Esophagus muscularis mucosa (tissue), 4 donors: ENCODE measurements at regions of chr1 and their contacts with region 1.

Region 1: DNA sequence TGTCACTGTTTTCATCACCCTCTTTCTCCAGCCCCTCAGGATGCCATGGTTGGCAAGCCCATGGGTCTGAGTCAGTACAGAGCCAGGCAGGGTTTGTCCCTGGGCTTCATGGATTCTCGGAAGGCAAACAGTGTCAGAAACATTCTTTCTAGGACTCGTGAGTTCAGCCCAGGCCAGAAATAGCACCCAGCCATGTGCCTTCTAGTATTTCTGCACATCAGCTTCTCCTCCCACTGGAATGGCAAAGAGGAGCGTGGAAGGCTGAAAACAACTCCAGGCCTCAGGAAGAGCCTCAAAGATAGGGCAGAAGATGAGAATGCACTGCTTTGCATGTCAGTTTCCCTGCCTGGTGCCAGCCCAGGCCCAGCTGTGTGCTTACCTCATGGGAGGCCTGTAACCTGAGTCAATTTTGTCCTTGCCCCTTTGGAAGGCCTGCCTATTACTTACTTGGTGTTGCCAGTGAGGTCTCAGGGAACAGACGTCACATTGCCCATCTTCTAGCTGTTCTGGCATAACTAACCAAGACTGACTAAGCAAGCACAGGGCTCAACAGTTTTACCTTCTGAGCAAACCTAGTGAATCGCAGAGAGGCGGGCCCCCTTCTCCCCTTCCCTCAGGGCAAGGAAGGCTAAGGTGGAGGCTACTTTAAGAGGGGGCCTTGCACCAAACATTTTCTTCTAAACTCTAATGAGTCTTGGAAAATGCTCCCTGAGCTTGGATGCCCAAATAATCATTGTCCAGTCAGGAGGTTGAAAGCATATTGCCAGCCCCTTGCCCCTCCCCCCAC is 42.4 kb downstream of the GLUL start:
- DNase-seq: no peak
- H3K4me3 ChIP-seq: no peak overlapping the region
- H3K27ac ChIP-seq: peak overlapping the region; percentile 79 to 83 (median 80)
- H3K4me1 ChIP-seq: peaks cover 17 to 55% (median 49%) of the 10 kb centered on the region in 4 donors
- H3K27me3 ChIP-seq: no peaks in the 10 kb centered on the region
- CTCF ChIP-seq: no peak
- EP300 ChIP-seq: peak; percentile 93
- POLR2A ChIP-seq: no peak

Region 2: DNA sequence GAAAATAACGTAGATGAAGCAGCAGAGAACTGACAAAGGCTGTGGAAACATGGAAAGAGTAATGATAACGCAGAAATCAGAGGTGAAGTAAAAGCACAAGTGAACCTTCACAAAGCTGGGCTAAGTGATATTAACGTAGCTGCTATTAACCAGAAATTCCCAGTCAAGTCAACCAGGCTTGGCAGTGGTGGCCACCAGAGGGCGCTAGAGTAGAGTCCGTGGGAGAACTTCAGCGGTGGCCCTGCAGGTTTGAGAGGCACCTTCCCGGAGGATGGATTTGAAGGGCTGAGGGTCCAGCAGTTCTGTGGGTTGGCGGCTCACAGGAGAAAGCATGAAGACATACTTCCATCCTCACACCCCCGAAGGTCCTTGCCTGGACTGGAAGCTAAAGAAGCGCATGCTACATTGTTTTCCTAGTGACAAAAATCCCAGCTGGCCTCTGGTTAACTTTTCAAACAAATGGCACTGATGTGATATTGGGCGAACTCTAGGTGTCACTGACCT is 205.9 kb before region 1 on chr1:
- intact Hi-C with region 1: loop called (anchors 5 kb)
- DNase-seq: peak; percentile 99
- H3K4me3 ChIP-seq: peak overlapping the region in 1 of 4 donors; percentile 21
- H3K27ac ChIP-seq: peak overlapping the region; percentile 90 to 97 (median 95)
- H3K4me1 ChIP-seq: peaks cover 26 to 50% (median 41%) of the 10 kb centered on the region in 4 donors
- H3K27me3 ChIP-seq: no peaks in the 10 kb centered on the region
- CTCF ChIP-seq: peak; percentile 95 to 98 (median 97)
- EP300 ChIP-seq: no peak
- POLR2A ChIP-seq: no peak

Region 3: DNA sequence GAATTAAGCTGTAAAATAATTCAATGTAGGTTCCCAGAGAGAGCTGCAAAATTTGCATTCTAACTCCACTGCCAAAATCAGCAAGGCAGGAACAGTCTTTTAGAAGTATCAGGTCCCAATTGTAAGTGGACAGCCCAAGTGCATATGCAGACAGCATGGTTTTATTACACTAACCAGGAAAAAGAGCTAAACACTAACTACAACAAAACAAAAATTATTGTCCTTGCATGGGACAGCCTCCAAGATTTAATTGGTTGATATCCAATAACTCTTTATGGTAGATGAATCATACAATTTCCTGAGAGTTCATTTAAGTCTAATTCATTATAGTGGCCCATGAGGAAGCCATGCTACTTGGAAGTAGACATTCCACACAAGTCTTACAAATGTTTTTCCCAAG is 133.4 kb before region 1 on chr1:
- intact Hi-C with region 1: no loop called
- DNase-seq: no peak
- H3K4me3 ChIP-seq: no peak overlapping the region
- H3K27ac ChIP-seq: no peak overlapping the region
- H3K4me1 ChIP-seq: peaks cover 0 to under 1% (median 0%) of the 10 kb centered on the region in 4 donors
- H3K27me3 ChIP-seq: no peaks in the 10 kb centered on the region
- CTCF ChIP-seq: no peak
- EP300 ChIP-seq: no peak
- POLR2A ChIP-seq: no peak

Region 4: DNA sequence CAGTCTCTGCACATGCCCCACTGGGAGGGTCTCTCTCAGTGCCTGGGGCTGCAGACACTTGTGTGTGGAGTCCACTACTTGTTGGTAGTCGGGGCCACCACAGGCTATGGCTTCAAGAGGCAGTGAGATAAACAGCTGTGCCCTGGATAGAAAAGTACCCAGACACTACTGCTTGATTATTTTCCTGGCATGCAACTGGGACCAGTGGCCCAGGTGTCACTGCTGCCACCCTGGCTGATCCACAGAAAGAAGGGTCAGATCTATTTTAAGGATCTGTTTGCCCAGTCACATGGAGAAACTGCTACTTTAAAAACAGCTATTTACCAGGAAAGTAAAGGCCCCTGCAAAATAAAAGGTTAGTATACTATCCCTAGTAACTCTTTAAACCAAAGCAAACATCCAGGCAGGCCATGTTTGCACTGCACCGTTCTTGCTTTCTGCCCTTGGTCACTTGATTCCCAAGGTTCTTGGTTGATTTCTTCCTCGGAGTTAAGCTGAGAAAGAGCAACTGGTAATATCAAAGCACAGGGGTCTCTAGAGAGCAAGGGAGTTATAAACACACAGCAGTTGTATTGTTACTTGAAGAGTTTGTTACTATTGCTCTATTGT is 57.5 kb before region 1 on chr1:
- intact Hi-C with region 1: loop called (anchors 2 kb)
- DNase-seq: no peak
- H3K4me3 ChIP-seq: no peak overlapping the region
- H3K27ac ChIP-seq: peak overlapping the region; percentile 71 to 86 (median 82)
- H3K4me1 ChIP-seq: peaks cover 15 to 49% (median 35%) of the 10 kb centered on the region in 4 donors
- H3K27me3 ChIP-seq: no peaks in the 10 kb centered on the region
- CTCF ChIP-seq: no peak
- EP300 ChIP-seq: no peak
- POLR2A ChIP-seq: no peak

Region 5: DNA sequence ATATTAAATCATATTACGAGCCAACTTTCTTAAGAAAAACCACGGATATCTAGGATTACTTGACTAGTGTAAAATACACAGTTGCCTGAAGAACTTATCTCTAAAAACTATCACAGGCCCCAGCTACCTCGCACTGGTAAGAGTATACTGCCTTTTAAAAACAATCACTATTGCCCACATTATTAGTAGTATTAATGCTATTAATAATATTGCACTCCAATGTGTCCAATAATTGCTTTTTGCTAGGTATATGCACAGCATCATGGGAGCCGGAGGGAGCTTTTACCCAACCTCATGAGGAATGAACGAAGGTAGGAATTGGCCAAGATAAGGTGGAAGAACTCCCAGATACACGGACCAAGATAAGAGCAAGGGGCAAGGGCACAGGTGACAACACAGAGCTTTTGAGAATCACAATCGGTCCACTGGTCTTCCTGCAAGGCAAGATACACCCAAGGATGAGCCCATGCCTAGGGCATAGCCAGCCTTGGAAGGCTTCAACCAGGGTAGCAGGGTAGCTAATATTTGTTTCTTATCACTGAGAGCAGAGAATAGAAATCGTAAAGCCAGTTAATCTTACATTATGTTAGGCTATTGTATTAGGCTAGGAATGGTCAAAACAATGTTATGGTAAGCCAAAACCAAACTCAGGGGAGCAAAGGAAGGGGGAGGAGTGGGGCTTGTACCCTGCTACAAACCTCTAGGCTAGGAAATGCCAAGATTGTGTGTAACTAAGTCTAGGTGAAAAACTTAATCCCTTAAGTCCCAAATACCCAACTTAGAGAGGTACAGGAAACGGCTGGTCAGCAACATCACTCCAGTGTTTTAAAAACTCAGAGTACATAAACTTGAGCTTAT is 33.0 kb after region 1 on chr1:
- intact Hi-C with region 1: loop called (anchors 5 kb)
- DNase-seq: no peak
- H3K4me3 ChIP-seq: no peak overlapping the region
- H3K27ac ChIP-seq: peak overlapping the region; percentile 21 to 97 (median 37)
- H3K4me1 ChIP-seq: peaks cover 36 to 49% (median 43%) of the 10 kb centered on the region in 4 donors
- H3K27me3 ChIP-seq: no peaks in the 10 kb centered on the region
- CTCF ChIP-seq: no peak
- EP300 ChIP-seq: no peak
- POLR2A ChIP-seq: no peak